ENCODE measurements at regions of chr1 and their contacts with region 1.

Region 1: DNA sequence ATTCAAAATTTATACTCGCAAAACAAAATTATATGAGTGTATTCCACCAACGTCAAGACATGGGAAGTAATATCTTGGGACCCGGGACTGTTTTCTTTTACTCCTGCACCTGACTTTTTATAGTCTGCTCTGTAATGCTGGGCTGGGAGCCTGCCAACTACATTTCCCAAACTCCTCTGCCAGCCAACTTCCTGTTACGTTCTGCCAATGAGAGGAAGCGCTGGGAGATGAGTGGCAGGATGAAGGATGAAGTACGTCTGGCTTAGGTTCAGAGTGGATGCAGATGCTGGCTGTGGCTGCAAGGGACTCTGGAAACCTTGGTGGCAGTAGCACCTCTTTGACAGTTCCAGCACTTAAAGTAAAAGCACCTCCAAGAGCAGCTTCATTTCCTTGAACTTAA is 59.6 kb downstream of the USP24 start:
- H3K4me3 Mint-ChIP-seq: no peak overlapping the region
- H3K27ac Mint-ChIP-seq: no peak overlapping the region
- H3K4me1 Mint-ChIP-seq: peaks cover 12% of the 10 kb centered on the region
- H3K27me3 Mint-ChIP-seq: no peaks in the 10 kb centered on the region

Region 2: GRCh38 chr1:55195521-55196233 is 40.2 kb after region 1 on chr1:
- intact Hi-C with region 1: loop called (anchors 5 kb)
- H3K4me3 Mint-ChIP-seq: no peak overlapping the region
- H3K27ac Mint-ChIP-seq: no peak overlapping the region
- H3K4me1 Mint-ChIP-seq: peaks cover 39% of the 10 kb centered on the region
- H3K27me3 Mint-ChIP-seq: no peaks in the 10 kb centered on the region